Activated naive CD4-positive, alpha-beta T cell treated with anti-CD3 and anti-CD28 coated beads, Interleukin-2, amount 10 ng/mL, durations not matched to agents 7 days and 5 days (primary cell): ENCODE measurements at regions of chr16 and their contacts with region 1.

Region 1: GRCh38 chr16:28863929-28864793 is 518 bp downstream of the SH2B1 start:
- DNase-seq: peak; percentile 29
- H3K4me3 Mint-ChIP-seq: peak overlapping the region; percentile 89
- H3K27ac Mint-ChIP-seq: peak overlapping the region; percentile 98
- H3K4me1 Mint-ChIP-seq: peaks cover 40% of the 10 kb centered on the region
- H3K27me3 Mint-ChIP-seq: no peaks in the 10 kb centered on the region

Region 2: GRCh38 chr16:28617874-28618273 is 246.3 kb before region 1 on chr16:
- CTCF ChIA-PET with region 1: no interaction called
- DNase-seq: no peak
- H3K4me3 Mint-ChIP-seq: no peak overlapping the region
- H3K27ac Mint-ChIP-seq: no peak overlapping the region
- H3K4me1 Mint-ChIP-seq: peaks cover 11% of the 10 kb centered on the region
- H3K27me3 Mint-ChIP-seq: no peaks in the 10 kb centered on the region

Region 3: GRCh38 chr16:28846080-28846932 is 17.9 kb before region 1 on chr16 and contains the start of gene TUFM:
- CTCF ChIA-PET with region 1: interaction called, 18 read pairs
- DNase-seq: peak; percentile 99
- H3K4me3 Mint-ChIP-seq: peak within 1 kb of the TSS; percentile 90
- H3K27ac Mint-ChIP-seq: peak within 1 kb of the TSS; percentile 93
- H3K4me1 Mint-ChIP-seq: peaks cover 33% of the 10 kb centered on the region
- H3K27me3 Mint-ChIP-seq: no peaks in the 10 kb centered on the region

Region 4: GRCh38 chr16:29129514-29129913 is 265.4 kb after region 1 on chr16:
- CTCF ChIA-PET with region 1: no interaction called
- DNase-seq: no peak
- H3K4me3 Mint-ChIP-seq: no peak overlapping the region
- H3K27ac Mint-ChIP-seq: no peak overlapping the region
- H3K4me1 Mint-ChIP-seq: peaks cover 14% of the 10 kb centered on the region
- H3K27me3 Mint-ChIP-seq: no peaks in the 10 kb centered on the region